ENCODE measurements at regions of chr1 and their contacts with region 1.

Region 1: DNA sequence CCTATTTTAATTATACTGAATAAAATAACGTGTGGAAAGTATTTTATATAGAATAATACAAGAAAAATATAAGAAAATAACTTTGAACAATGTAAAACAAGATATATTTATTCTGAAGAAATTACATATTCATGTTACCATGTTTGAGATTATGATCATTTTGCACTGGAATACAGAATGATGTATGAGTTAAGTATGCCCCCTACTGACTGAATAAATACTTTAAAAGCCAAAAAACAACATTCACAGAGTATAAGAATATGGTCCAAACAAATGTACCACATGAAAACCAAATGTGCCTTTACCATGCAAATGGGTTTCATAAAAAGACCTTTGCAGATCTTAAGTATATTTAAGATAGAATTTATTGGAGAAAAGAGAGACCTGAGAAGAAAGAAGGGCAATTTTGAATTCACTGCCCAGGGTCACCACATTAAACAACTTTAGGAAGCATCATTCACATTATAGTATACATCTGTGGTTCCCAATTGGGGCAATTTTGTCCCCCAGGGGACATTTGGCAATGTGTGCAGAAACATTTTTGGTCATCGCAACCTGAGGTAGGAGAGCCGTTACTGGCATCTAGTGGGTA is 136.6 kb upstream of the GFI1 start:
- DNase-seq: no peak
- CTCF ChIP-seq: no peak

Region 2: DNA sequence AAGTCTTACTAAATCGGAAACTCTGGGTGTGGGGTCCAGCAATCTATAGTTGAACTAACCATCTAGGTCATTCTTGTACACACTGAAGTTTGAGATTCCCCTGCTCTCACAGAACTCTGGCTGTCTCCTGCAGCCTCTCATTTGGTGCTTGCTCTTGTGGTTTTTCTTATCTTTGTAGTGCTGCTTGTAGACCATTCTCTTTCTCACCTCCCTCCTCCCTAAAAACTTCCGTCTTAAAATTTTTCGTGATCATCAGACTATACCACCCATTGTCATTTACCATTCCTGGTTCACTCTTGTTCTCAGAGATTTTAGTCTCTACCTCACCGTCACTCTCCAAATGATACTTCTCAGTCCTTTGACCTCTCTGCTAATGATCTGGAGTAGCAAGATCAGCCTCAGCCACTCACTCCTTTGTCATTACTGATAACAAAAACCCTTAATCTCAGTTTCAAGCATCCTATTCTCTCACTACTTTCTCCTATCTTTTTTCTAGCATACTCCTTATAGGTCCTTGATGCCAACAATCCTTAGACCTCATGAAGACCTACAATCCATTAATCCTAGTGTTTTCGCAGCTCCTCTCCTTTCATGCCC is 606.5 kb before region 1 on chr1:
- in situ Hi-C with region 1: loop called (anchors 25 kb)
- DNase-seq: no peak
- CTCF ChIP-seq: no peak

Region 3: DNA sequence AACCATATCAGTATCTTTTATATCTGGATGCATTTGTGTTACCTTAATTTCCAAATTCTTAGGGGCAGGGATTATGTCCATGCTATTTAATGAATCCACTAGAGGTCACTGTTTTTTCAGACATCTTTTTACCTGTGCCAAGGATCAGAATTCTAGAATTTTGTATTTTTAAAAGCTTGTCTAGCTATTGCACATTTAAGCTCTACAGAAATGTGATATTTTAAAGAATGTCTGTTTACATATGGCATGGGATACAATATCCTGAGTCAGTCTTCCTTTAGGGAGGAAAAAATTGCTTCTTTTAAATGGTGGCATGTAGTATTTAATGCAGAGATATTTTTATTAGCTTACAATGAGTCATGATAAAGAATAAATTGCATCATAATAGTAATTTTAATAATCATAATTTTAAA is 313.1 kb before region 1 on chr1:
- in situ Hi-C with region 1: loop called (anchors 10 kb)
- DNase-seq: peak; percentile 37
- CTCF ChIP-seq: peak; percentile 29

Measured in GM13976 (cell line).